A549 (cell line): ENCODE measurements at regions of chr10 and their contacts with region 1.

Region 1: DNA sequence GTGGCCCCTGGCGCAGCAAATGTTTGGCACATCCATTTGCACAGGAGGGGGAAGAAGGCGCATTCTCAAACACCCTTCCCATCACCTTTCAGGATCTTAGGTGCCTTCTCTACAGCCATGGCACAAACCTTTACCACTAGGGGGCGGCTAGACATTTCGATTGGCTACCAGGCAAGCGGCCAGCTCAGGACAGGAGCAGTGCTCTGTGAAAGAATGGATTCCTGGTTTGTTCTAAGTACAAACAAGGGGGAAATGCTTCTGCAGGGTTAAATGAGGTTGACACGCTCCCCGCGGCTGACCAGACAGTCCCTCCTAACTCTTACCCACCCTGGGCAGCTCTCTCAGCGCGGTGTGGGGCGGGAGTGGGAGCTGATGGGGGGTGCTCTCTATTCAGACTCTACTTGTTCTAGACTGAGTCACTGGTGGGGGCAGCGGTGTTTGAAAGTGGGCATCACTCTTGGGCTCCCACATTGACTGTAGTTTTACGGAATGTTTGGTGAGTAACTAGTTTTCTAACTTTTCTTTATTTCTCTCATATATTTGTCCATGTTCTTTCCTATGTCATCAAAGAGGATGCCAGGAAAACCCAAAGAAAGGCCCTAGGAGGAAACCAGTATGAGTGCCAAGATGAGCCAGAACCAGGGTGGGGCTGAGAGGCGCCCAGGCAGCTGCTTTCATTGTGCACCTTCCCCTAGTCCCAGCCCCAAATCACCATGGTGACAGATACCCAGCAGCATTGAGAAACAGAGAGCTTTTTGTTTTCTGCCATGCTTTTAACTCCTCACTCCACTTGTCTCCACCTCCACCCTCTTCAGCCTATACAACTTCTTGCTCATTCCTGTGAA is 61.4 kb upstream of the GPR158 start:
- DNase-seq: peak; percentile 45 to 80
- ATAC-seq: peak; percentile 97 to 99
- H3K4me3 ChIP-seq: no peak overlapping the region
- H3K27ac ChIP-seq: no peak overlapping the region
- H3K4me1 ChIP-seq: no peaks in the 10 kb centered on the region
- CTCF ChIP-seq: peak; percentile 85
- EP300 ChIP-seq: no peak
- POLR2A ChIP-seq: no peak
- RAD21 ChIP-seq: peak; percentile 85 to 89

Region 2: GRCh38 chr10:25101461-25102146 is 11.8 kb before region 1 on chr10:
- CTCF ChIA-PET with region 1: interaction called, 28 read pairs
- POLR2A ChIA-PET with region 1: no interaction called
- DNase-seq: no peak
- ATAC-seq: no peak
- H3K4me3 ChIP-seq: no peak overlapping the region
- H3K27ac ChIP-seq: no peak overlapping the region
- H3K4me1 ChIP-seq: no peaks in the 10 kb centered on the region
- CTCF ChIP-seq: no peak
- EP300 ChIP-seq: no peak
- POLR2A ChIP-seq: no peak
- RAD21 ChIP-seq: no peak

Region 3: DNA sequence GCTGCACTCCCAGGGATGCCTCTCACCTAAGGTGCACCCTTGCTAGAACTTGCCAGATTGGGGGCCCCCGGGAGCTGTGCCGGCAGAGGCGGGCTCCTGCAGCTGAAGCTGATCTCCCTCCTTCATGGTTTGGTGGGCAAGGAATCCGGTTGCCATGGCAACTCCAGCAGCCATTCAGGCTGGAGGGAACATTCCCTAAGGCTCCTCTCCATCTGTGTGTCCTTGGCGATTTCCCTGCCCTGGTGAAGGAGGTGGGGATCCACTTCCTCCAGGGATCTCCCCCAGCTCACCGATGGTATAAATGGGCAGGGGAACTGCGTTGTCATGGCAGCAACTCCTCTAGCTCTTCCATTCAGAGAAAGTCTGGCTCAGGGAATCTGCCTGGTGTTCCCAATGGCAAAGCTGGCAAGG is 11.8 kb after region 1 on chr10:
- CTCF ChIA-PET with region 1: interaction called, 14 read pairs
- POLR2A ChIA-PET with region 1: no interaction called
- DNase-seq: no peak
- ATAC-seq: no peak
- H3K4me3 ChIP-seq: no peak overlapping the region
- H3K27ac ChIP-seq: no peak overlapping the region
- H3K4me1 ChIP-seq: no peaks in the 10 kb centered on the region
- CTCF ChIP-seq: no peak
- EP300 ChIP-seq: no peak
- POLR2A ChIP-seq: no peak
- RAD21 ChIP-seq: no peak

Region 4: GRCh38 chr10:25130906-25131305 is 17.5 kb after region 1 on chr10:
- CTCF ChIA-PET with region 1: interaction called, 14 read pairs
- POLR2A ChIA-PET with region 1: no interaction called
- DNase-seq: no peak
- ATAC-seq: no peak
- H3K4me3 ChIP-seq: no peak overlapping the region
- H3K27ac ChIP-seq: no peak overlapping the region
- H3K4me1 ChIP-seq: no peaks in the 10 kb centered on the region
- CTCF ChIP-seq: no peak
- EP300 ChIP-seq: no peak
- POLR2A ChIP-seq: no peak
- RAD21 ChIP-seq: no peak

Region 5: DNA sequence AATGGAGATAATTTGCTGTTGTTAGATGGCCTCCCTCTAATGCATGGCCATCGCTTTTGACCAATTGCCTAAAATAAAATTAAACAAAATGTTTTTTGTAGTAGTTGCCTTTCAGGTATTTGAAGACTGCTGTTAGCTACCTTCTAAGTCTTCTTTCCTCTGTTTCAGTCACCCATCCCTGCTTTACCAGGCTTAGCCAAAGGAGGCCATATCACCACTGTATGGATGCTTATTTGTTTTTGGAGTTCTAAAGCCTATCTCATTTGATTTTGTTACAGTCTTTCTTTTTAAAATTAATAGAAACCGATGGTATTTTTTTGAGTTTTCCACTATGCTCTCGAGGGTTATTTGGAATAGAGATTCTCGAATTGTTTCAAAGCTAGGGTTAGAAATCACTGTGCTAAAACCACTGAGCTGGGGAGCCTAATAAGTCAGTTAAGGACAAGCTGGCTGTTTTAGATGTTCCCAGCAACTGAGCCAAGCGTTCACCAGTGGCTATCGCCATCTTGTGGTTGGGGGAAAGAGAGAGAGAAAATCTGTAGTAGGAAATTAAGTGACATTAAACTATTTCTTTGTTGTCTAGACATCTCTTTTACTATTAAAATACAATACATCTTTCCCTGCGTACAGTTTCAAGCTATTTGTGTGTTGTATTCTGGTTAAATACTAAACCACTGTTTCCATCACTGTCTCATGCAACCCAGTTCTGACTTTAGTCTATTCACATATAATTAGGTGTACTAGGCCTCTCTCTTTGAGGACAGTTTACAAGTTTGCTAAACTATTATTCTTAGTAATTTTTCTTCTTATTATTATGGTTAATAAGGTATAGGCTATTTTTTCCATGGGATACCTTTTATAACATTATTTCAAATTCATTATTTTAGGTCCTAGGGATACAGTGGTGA is 113.6 kb after region 1 on chr10:
- CTCF ChIA-PET with region 1: interaction called, 24 read pairs
- POLR2A ChIA-PET with region 1: no interaction called
- DNase-seq: peak in 1 of 2 experiments; percentile 57
- ATAC-seq: peak in 1 of 2 experiments; percentile 81; a peak in 3 of 6 replicates
- H3K4me3 ChIP-seq: no peak overlapping the region
- H3K27ac ChIP-seq: no peak overlapping the region
- H3K4me1 ChIP-seq: no peaks in the 10 kb centered on the region
- CTCF ChIP-seq: peak; percentile 69
- EP300 ChIP-seq: no peak
- POLR2A ChIP-seq: no peak
- RAD21 ChIP-seq: peak; percentile 67 to 87

Region 6: GRCh38 chr10:25682203-25682851 is 568.9 kb after region 1 on chr10:
- CTCF ChIA-PET with region 1: interaction called, 19 read pairs
- POLR2A ChIA-PET with region 1: no interaction called
- DNase-seq: peak; percentile 21 to 23
- ATAC-seq: peak; percentile 89 to 90
- H3K4me3 ChIP-seq: 0 out of 3 replicates have a peak overlapping the region, but pooled peaks have one; percentile 18
- H3K27ac ChIP-seq: 0 out of 6 replicates have a peak overlapping the region, but pooled peaks of 1 of the 2 experiments have one; percentile 16
- H3K4me1 ChIP-seq: no peaks in the 10 kb centered on the region
- CTCF ChIP-seq: peak; percentile 34
- EP300 ChIP-seq: no peak
- POLR2A ChIP-seq: no peak
- RAD21 ChIP-seq: peak; percentile 64 to 66